ENCODE measurements at regions of chr4 and their contacts with region 1.

Region 1: DNA sequence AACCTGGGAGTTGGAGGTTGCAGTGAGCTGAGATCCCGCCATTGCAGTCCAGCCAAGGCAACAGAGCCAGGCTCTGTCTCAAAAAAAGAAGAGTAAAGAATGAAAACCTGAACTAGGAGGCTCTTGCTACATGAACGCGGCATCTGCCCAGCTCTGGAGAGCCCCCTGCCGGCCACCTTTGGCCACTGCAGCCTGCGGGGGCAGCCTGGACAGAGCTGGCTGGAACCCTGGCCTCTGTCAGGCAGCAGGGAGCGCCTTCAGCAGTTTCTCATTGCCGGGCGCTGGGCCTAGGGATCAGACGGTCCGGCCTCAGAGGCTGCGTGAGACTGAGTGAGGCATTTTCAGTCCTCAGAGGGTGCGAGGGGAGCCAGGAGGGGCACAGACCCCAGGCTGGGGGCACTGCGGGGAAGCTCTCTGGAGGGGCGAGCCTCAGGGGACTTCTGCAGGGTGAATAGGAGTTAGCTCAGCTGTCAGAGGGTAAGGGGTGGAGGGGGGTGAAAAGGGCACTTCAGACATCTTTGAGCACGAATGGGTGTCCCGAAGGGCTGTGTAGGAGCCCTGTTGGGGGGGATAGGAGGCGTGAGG is 17.5 kb downstream of the DOK7 start:
- DNase-seq: peak; percentile 66 to 100
- H3K4me3 ChIP-seq: peak overlapping the region in 2 of 4 experiments; percentile 23 to 49; a peak in 4 of 8 replicates
- H3K27ac ChIP-seq: no peak overlapping the region
- H3K4me1 ChIP-seq: peaks cover 0 to 30% (median 22%) of the 10 kb centered on the region in 4 experiments; a peak in 6 of 7 replicates
- H3K27me3 ChIP-seq: peaks cover 7 to 69% (median 48%) of the 10 kb centered on the region in 4 experiments
- CTCF ChIP-seq: peak in 2 of 3 experiments; percentile 97 to 98; a peak in 3 of 4 replicates
- EP300 ChIP-seq: no peak
- POLR2A ChIP-seq: no peak
- RAD21 ChIP-seq: peak; percentile 78 to 88

Region 2: DNA sequence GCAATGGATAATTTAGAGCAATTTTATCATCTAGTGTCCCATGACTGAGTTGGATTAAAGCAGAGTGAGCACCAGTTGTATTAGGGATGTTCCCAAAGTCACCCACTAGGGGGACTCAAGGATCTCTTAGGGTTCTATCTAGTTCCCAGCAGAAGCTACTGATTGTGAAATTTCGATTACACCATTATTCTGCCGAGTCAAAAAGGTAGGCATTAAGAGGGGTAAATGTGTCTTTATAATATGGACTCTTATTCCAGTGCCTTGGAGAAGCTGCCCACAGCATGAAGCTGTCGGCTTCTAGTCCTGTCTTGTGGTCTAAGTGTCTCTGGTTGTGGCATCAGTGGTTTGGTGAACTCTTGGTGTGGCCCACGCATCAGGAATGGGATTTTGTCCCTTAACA is 134.5 kb before region 1 on chr4:
- CTCF ChIA-PET with region 1: interaction called, 35 read pairs
- POLR2A ChIA-PET with region 1: no interaction called
- DNase-seq: no peak
- H3K4me3 ChIP-seq: no peak overlapping the region
- H3K27ac ChIP-seq: no peak overlapping the region
- H3K4me1 ChIP-seq: peaks cover 3 to 10% (median 5%) of the 10 kb centered on the region in 4 experiments; a peak in 5 of 7 replicates
- H3K27me3 ChIP-seq: no peaks in the 10 kb centered on the region
- CTCF ChIP-seq: peak in 2 of 3 experiments; percentile 76 to 78; a peak in 3 of 4 replicates
- EP300 ChIP-seq: no peak
- POLR2A ChIP-seq: no peak
- RAD21 ChIP-seq: peak; percentile 90 to 91

Region 3: DNA sequence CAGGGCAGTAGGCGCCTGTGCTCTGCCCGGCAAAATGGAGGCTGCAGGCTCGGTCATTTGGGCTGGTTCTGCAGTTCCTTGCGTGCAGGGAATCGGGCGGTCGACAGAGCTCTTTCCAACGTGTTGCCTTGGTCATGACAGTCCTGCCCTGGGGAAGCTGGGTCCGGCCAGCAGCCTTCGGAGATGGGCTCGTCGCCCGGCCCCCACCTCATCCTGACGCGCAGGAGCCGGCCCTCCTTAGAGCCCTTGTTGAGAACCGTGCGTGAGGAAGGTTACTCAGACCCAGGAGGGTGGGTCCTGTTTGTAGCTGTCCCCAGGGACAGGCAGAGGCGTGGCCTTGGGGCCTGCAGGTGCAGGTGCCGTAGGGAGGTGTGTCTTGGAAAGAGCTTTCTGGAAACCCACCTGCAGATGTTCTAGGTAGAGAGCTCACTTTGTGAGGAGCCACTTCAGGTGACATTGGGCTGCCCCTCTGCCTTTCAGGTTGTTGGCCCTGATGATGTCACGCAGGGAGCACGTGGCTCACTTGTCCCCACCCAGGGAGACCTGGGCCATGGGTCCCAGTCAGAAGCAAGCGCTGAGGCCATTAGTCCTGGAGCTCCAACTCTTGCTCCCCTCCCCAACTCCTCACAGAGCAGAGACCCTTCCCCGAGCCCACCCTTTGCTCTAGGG is 54.0 kb before region 1 on chr4:
- CTCF ChIA-PET with region 1: interaction called, 31 read pairs
- POLR2A ChIA-PET with region 1: interaction called, 3 read pairs
- DNase-seq: no peak
- H3K4me3 ChIP-seq: no peak overlapping the region
- H3K27ac ChIP-seq: no peak overlapping the region
- H3K4me1 ChIP-seq: no peaks in the 10 kb centered on the region; a peak in 1 of 7 replicates
- H3K27me3 ChIP-seq: no peaks in the 10 kb centered on the region; a peak in 1 of 7 replicates
- CTCF ChIP-seq: no peak
- EP300 ChIP-seq: no peak
- POLR2A ChIP-seq: no peak
- RAD21 ChIP-seq: no peak

Region 4: DNA sequence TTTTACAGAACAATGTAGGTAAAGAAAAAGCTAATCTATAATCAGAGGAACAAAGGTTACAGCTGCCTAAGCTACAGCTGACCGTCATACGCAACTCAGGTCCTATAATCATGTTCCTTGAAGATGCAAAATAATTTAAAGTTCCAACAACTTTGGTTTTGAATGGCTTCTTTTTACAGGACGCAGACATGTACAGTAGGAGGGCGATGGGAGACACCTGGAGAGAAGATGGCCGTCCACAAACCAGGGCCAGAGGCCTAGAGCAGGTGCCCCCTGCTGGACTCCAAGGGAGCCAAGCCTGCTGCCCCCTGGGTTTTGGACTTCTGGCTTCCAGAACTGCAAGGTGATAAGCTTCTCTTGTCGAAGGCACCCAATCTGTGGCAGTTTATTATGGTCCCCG is 28.2 kb before region 1 on chr4:
- CTCF ChIA-PET with region 1: interaction called, 13 read pairs
- POLR2A ChIA-PET with region 1: no interaction called
- DNase-seq: no peak
- H3K4me3 ChIP-seq: no peak overlapping the region
- H3K27ac ChIP-seq: no peak overlapping the region
- H3K4me1 ChIP-seq: no peaks in the 10 kb centered on the region; a peak in 1 of 7 replicates
- H3K27me3 ChIP-seq: peaks cover 0 to 3% (median 0%) of the 10 kb centered on the region in 4 experiments; a peak in 5 of 7 replicates
- CTCF ChIP-seq: peak in 2 of 3 experiments; percentile 74 to 88; a peak in 3 of 4 replicates
- EP300 ChIP-seq: no peak
- POLR2A ChIP-seq: no peak
- RAD21 ChIP-seq: peak; percentile 35 to 49; a peak in 3 of 4 replicates

Region 5: DNA sequence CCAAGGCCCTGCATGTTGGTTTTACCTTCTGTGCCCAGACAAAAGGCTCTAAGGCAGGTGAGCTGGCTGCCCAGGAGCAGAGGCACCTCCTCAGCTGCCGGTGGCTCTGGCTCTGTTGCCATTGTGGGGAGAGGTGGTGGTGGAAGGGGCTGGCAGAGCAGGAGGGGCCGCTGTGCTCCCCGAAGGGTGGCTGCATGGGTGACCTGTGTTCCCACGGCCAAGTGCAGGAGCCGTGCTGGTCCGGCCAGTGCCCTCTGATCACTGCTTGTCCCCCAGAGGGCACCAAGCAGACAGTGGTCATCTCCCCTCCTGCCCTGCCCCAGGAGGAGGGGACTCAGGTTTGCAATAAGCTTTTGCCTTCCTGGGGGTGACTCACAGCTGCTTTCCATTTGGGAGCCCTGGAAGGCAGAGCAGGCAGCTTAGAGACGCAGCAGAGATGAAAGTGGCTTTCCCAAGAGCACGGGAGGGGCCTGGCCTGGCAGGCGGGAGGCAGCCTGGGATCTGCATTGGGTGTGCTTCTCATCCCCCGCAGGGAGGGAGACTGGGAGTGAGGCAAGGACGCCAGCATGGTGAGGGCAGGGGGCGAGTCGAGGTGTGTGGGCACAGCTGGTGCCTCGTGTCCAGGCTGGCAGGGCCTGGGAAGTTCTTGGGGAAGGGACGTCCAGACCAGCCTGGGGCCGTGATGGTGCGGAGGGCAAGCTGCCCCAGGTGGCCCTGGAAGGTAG is 11.2 kb after region 1 on chr4:
- CTCF ChIA-PET with region 1: interaction called, 25 read pairs
- POLR2A ChIA-PET with region 1: interaction called, 5 read pairs
- DNase-seq: no peak
- H3K4me3 ChIP-seq: no peak overlapping the region
- H3K27ac ChIP-seq: no peak overlapping the region
- H3K4me1 ChIP-seq: peaks cover 0 to 22% (median 13%) of the 10 kb centered on the region in 4 experiments; a peak in 5 of 7 replicates
- H3K27me3 ChIP-seq: peaks cover 57 to 95% (median 92%) of the 10 kb centered on the region in 4 experiments
- CTCF ChIP-seq: no peak
- EP300 ChIP-seq: no peak
- POLR2A ChIP-seq: no peak
- RAD21 ChIP-seq: no peak

Region 6: GRCh38 chr4:3783406-3784306 is 303.0 kb after region 1 on chr4:
- CTCF ChIA-PET with region 1: interaction called, 20 read pairs
- POLR2A ChIA-PET with region 1: no interaction called
- DNase-seq: peak in 1 of 2 experiments; percentile 86
- H3K4me3 ChIP-seq: no peak overlapping the region
- H3K27ac ChIP-seq: no peak overlapping the region
- H3K4me1 ChIP-seq: peaks cover 0 to 9% (median 8%) of the 10 kb centered on the region in 4 experiments; a peak in 5 of 7 replicates
- H3K27me3 ChIP-seq: no peaks in the 10 kb centered on the region
- CTCF ChIP-seq: peak in 2 of 3 experiments; percentile 79 to 81; a peak in 3 of 4 replicates
- EP300 ChIP-seq: no peak
- POLR2A ChIP-seq: no peak
- RAD21 ChIP-seq: peak; percentile 81 to 85

Measured in H1 (cell line).